T-cell (primary cell): ENCODE measurements at regions of chr17 and their contacts with region 1.

Region 1: GRCh38 chr17:21841839-21842238 is 149.5 kb downstream of the KCNJ18 start:
- DNase-seq: no peak
- ATAC-seq: no peak
- H3K4me3 ChIP-seq: no peak overlapping the region
- H3K4me3 Mint-ChIP-seq: no peak overlapping the region
- H3K27ac ChIP-seq: no peak overlapping the region
- H3K27ac Mint-ChIP-seq: no peak overlapping the region
- H3K4me1 ChIP-seq: no peaks in the 10 kb centered on the region
- H3K4me1 Mint-ChIP-seq: no peaks in the 10 kb centered on the region
- H3K27me3 ChIP-seq: peaks cover 0 to 26% of the 10 kb centered on the region in 2 experiments
- H3K27me3 Mint-ChIP-seq: peaks cover 3 to 10% of the 10 kb centered on the region in 2 donors

Region 2: GRCh38 chr17:21814776-21815175 is 27.1 kb before region 1 on chr17:
- CTCF ChIA-PET with region 1: no interaction called
- POLR2A ChIA-PET with region 1: interaction called in 1 of 2 experiments, 16 read pairs
- DNase-seq: no peak
- ATAC-seq: no peak
- H3K4me3 ChIP-seq: no peak overlapping the region
- H3K4me3 Mint-ChIP-seq: no peak overlapping the region
- H3K27ac ChIP-seq: no peak overlapping the region
- H3K27ac Mint-ChIP-seq: no peak overlapping the region
- H3K4me1 ChIP-seq: no peaks in the 10 kb centered on the region
- H3K4me1 Mint-ChIP-seq: no peaks in the 10 kb centered on the region
- H3K27me3 ChIP-seq: peaks cover 0 to 4% of the 10 kb centered on the region in 2 experiments
- H3K27me3 Mint-ChIP-seq: no peaks in the 10 kb centered on the region